Thyroid gland (tissue), 4 donors: ENCODE measurements at regions of chr12 and their contacts with region 1.

Region 1: DNA sequence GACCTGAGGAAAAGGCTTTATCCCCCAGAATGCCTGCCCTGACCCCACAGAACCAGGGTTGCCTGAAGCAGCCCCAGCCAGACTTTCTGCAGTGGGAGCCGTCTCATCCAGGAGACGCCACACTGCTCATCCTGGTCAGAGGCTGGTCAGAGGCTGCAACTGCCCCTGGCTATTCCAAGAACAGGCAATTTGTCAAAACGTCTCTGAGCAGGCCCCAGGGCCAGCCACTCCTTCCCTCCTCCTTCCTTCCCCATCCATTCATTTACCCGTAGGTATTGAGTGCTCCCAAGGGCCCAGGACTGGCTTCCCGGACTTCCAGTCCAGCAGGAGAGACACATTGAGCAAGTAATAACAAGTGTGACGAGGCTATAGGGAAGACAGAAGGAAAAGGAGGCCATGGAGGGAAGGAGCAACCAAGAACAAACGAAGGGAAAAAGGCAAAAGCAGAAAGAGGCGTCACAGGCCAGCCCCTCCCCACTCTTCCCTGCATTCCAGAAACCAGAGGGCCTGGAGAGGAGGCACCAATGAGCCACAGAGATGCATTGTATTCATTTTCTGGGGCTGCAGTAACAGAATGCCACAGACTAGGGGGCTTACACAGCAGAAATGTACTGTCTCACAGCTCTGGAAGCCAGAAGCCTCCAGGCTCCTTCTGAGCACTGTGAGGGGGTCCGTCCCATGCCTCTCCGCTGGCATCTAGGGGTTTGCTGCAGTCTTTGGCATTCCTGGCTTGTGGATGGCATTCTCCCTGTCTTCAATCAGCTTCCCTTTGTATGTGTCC is 21.0 kb upstream of the CD9 start:
- DNase-seq: no peak
- H3K4me3 ChIP-seq: no peak overlapping the region
- H3K27ac ChIP-seq: peak overlapping the region; percentile 54 to 72 (median 61)
- H3K4me1 ChIP-seq: peaks cover 16 to 40% of the 10 kb centered on the region in 2 donors
- H3K27me3 ChIP-seq: no peaks in the 10 kb centered on the region
- CTCF ChIP-seq: no peak
- POLR2A ChIP-seq: no peak

Region 2: DNA sequence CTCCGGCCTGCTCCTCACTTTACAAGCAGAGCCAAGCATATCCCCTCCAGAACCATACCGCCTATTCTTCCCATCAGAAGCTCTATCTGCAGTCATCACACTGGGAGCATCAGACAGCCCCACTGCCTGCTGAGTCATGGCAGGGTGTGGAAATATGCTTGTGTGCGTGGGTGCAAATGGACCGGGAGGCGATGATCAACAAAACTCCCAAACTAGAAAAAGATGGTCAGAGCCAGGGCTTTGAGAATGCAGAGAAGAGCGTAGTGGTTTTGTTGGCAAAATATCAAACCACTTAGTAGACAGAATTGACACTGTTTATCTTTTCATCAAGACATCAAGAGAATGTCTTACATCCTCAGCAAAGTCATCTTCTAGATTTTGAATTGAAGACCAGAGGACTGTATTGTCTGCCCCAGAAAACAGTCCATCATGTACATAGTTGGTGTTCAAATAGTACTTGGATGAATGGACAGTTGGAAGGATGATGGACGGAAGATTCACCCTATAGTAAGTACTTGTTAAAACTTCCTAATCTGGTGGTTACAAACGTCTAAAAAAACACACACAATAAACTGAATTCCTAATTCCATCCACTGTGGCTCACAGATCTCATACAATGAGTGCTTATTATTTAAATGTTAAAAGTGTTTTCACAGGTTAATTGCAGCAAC is 109.6 kb before region 1 on chr12:
- intact Hi-C with region 1: loop called (anchors 5 kb)
- DNase-seq: no peak
- H3K4me3 ChIP-seq: no peak overlapping the region
- H3K27ac ChIP-seq: peak overlapping the region in 2 of 3 donors; percentile 23 to 38
- H3K4me1 ChIP-seq: peaks cover 0 to 10% of the 10 kb centered on the region in 2 donors
- H3K27me3 ChIP-seq: no peaks in the 10 kb centered on the region
- CTCF ChIP-seq: no peak
- POLR2A ChIP-seq: no peak

Region 3: GRCh38 chr12:6267139-6267721 is 88.1 kb after region 1 on chr12:
- intact Hi-C with region 1: no loop called
- DNase-seq: peak; percentile 57 to 61
- H3K4me3 ChIP-seq: no peak overlapping the region
- H3K27ac ChIP-seq: peak overlapping the region; percentile 86 to 94 (median 93)
- H3K4me1 ChIP-seq: peaks cover 33 to 65% of the 10 kb centered on the region in 2 donors
- H3K27me3 ChIP-seq: no peaks in the 10 kb centered on the region
- CTCF ChIP-seq: peak in 1 of 6 experiments; percentile 4
- POLR2A ChIP-seq: peak in 1 of 2 donors; percentile 40